Colonic mucosa (tissue), 4 donors: ENCODE measurements at regions of chr1 and their contacts with region 1.

Region 1: GRCh38 chr1:110766025-110766647 is 91.4 kb upstream of the KCNA3 start:
- DNase-seq: peak; percentile 20
- H3K4me3 ChIP-seq: no peak overlapping the region
- H3K27ac ChIP-seq: no peak overlapping the region
- H3K4me1 ChIP-seq: no peaks in the 10 kb centered on the region
- H3K27me3 ChIP-seq: no peaks in the 10 kb centered on the region
- CTCF ChIP-seq: peak; percentile 63

Region 2: DNA sequence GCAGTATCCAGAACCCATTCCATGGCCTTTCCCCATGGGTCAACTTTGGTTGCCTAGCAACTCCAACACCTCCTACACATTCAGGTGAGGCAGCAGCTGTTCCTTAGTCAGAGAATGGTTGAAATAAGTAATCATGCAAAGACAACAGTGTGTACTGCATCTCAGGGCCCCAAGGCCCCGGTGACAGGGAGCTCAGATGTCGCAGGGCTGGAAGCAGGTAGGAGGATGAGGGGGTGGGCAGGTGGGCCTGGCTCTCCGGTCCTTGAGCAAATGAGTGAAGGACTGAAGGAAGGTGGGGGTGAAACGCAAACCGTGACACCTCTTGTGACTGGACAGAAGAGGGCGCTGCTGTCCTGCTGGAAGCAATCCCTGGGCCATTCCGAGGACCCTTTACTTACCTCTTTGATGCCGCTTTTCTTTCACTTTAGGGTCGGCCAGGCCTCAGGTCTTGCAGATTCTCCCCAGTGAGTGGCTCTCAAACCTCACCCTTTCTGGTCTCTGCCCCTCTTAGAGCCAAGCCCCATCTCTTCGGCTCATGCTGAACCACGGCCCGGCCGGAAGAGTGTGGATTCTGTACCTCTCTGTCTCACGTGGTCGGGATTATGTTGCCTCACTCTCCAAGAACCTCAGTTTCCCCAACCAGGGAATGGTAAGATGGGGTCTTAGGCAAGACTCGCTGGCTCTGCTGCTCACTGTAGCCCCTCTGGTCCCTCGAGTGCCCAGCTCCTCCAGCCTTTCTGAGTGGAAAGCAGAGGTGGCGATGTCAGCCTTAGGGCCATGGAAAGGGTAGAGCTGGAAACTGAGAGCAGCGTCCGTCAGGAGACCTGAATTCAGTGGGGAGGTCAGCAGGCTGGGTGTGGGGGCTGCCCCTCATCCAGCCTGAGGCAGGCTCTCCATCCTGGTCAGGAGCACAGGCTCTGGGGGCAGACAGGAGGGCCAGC is 241.6 kb before region 1 on chr1:
- intact Hi-C with region 1: loop called (anchors 10 kb)
- DNase-seq: peak; percentile 24
- H3K4me3 ChIP-seq: no peak overlapping the region
- H3K27ac ChIP-seq: no peak overlapping the region
- H3K4me1 ChIP-seq: no peaks in the 10 kb centered on the region
- H3K27me3 ChIP-seq: no peaks in the 10 kb centered on the region
- CTCF ChIP-seq: peak; percentile 60